ENCODE measurements at regions of chrX and their contacts with region 1.

Region 1: GRCh38 chrX:129613596-129613995 is 41.2 kb downstream of the APLN start:
- DNase-seq: no peak
- ATAC-seq: no peak
- H3K4me3 ChIP-seq: no peak overlapping the region
- H3K27ac ChIP-seq: no peak overlapping the region
- H3K4me1 ChIP-seq: no peaks in the 10 kb centered on the region
- H3K27me3 ChIP-seq: no peaks in the 10 kb centered on the region
- CTCF ChIP-seq: no peak
- POLR2A ChIP-seq: no peak

Region 2: DNA sequence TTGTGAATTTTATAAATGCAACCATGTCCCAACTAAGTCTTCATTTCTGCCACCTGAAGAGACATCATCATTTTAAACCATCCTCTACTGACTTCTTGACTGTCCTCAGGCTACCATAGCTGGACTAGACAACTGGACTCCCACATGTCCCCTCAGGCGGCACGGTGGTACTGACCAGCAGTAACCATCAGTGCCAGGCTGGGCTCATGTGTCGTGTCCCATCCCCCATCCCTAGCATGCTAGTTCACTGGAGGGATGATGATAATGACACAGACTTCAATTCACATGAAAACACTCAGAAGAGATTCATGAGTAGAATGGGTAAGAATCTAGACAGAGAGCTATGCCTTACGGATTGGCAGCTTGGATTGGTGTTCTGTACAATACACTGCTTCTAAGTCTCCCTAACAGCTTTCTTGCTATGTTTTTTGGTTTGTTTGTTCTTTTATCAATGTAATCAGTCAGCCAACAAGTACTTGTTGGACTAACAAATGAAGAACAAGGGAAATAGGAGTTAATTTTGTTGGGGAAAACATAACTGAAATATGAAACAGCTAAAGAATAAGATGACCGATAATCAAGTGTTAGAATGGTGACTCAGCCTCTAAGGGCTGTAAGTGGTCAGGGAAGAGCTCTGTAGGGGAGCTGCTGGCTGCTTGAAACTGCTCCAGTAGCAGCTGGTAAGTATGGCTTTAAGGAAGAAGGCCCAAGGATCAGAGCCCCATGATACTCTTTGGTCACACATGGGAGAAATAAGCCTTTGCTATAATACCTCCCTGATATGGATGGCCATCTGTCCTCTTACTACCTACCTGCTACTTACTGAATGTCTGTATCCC is 219.8 kb after region 1 on chrX:
- intact Hi-C with region 1: loop called in 1 of 2 experiments (anchors 10 kb)
- DNase-seq: no peak
- ATAC-seq: peak in 1 of 4 donors; percentile 13
- H3K4me3 ChIP-seq: no peak overlapping the region
- H3K27ac ChIP-seq: no peak overlapping the region
- H3K4me1 ChIP-seq: no peaks in the 10 kb centered on the region
- H3K27me3 ChIP-seq: no peaks in the 10 kb centered on the region
- CTCF ChIP-seq: no peak
- POLR2A ChIP-seq: no peak